ENCODE measurements at regions of chr12 and their contacts with region 1.

Region 1: DNA sequence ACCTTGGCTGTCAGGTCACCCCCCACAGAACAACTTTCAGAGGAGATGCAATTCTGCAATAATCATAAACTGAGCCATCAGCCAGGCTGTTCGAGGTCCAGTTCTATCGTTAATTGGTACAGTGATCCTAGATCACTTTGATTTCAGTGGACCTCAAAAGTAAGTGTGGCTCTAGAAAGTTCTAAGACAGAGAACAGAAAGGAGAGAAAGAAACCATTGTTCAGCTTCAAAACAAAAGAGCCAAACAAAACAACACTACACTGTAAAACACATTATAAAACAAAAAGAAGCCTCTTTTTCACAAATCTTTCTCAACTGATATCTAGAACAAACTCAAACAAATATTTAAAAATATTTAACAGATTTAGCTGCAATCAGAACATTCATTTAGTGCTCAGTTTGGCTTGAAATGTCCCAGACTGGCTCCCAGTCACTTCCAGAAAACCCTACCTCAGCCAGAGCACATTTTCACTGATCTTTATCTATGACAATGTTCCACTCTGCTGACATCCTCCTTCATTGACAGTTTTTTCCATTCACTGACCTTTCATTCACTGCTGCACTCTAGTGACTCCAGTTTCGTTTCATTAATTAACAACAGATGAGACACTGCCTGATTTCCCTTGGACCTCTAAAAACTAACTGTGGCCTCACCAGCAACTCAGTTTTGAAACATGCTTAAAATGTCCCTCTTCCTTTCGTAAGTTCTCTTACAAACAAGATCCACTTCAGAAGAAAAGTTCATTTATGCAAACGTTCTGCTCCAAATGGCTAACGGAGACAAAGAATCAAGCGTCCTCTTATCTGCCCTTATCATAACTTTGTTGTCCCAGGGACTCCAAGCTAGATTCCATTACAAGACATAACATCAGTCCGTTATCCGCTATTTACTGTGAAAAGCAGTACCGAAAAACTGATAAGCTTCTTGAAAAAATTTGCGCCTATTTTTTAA is 56.8 kb downstream of the DUSP16 start:
- DNase-seq: peak; percentile 51
- ATAC-seq: peak; percentile 79
- H3K4me3 Mint-ChIP-seq: peak overlapping the region; percentile 55
- H3K27ac Mint-ChIP-seq: peak overlapping the region; percentile 96
- H3K4me1 Mint-ChIP-seq: peaks cover 55% of the 10 kb centered on the region
- H3K27me3 Mint-ChIP-seq: no peaks in the 10 kb centered on the region

Region 2: GRCh38 chr12:12272869-12273268 is 233.0 kb before region 1 on chr12:
- CTCF ChIA-PET with region 1: no interaction called
- POLR2A ChIA-PET with region 1: no interaction called
- intact Hi-C with region 1: no loop called
- DNase-seq: no peak
- ATAC-seq: no peak
- H3K4me3 Mint-ChIP-seq: no peak overlapping the region
- H3K27ac Mint-ChIP-seq: no peak overlapping the region
- H3K4me1 Mint-ChIP-seq: peaks cover under 1% of the 10 kb centered on the region
- H3K27me3 Mint-ChIP-seq: no peaks in the 10 kb centered on the region

Region 3: DNA sequence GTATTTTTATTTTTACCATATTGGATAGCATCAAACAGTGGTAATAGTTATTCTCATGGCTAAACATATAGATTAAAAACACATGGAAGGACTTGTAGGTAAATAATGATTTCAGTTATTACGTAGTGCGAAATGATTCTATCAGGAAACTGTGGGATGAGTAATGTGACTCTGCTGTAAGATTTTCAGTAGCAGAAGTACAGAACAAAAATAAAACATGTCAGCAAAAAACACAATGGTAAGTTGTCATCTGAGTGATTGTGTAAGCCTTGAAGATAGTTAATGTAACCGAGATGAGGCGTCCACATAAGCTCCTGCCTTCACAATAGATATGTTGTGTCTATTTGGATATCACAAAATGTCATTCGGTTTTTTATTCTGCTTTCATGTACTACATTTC is 49.2 kb before region 1 on chr12:
- CTCF ChIA-PET with region 1: interaction called, 6 read pairs
- POLR2A ChIA-PET with region 1: interaction called, 12 read pairs
- intact Hi-C with region 1: no loop called
- DNase-seq: no peak
- ATAC-seq: peak; percentile 57
- H3K4me3 Mint-ChIP-seq: peak overlapping the region; percentile 3
- H3K27ac Mint-ChIP-seq: peak overlapping the region; percentile 88
- H3K4me1 Mint-ChIP-seq: peaks cover 46% of the 10 kb centered on the region
- H3K27me3 Mint-ChIP-seq: no peaks in the 10 kb centered on the region

Region 4: DNA sequence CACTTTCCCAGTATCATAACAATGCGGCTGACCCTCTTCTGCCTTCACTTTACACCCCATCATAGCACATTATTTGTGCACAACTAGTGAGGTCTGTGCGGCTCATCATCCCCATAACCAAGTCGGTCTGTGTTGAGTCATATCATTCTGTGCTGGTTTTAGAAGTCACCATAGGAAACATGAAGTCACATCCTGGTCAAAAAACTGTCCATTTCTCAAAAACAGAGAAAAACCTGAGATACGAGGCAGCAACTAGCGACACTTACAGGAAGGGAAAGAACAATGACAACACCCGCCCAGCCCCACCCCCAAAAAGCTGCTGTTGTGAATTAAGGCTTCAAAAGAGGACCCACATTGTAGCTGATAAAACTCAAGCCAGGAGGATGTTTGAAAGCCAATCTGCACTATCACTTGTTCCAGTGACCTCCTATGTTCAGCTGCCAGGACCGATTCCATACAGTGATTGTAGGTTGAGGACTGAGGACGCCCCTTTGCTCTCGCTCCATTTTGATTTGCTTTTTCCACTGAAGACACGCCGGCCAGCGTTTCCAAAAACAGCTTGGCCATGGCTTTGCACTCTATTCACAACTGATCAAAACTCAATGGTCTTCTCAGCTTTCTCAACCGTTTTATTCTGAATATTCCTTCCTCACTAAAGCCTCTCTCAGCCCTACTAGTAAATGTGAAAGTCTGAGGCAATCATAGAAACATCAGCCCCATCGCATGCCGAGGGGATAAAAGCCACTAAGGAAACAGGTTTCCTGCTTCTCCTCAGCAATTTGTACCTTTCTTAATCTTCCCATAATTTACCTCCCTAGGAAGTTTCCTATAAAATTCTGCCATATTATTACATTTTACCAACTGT is 30.7 kb before region 1 on chr12:
- CTCF ChIA-PET with region 1: interaction called, 5 read pairs
- POLR2A ChIA-PET with region 1: interaction called, 8 read pairs
- intact Hi-C with region 1: loop called in 1 of 2 experiments (anchors 1 kb)
- DNase-seq: peak; percentile 78
- ATAC-seq: peak; percentile 87
- H3K4me3 Mint-ChIP-seq: peak overlapping the region; percentile 59
- H3K27ac Mint-ChIP-seq: peak overlapping the region; percentile 97
- H3K4me1 Mint-ChIP-seq: peaks cover 81% of the 10 kb centered on the region
- H3K27me3 Mint-ChIP-seq: no peaks in the 10 kb centered on the region

Region 5: GRCh38 chr12:12611512-12612306 is 105.9 kb after region 1 on chr12 and contains the start of gene CREBL2:
- CTCF ChIA-PET with region 1: interaction called, 4 read pairs
- POLR2A ChIA-PET with region 1: no interaction called
- intact Hi-C with region 1: loop called (anchors 1 to 5 kb)
- DNase-seq: peak; percentile 92
- ATAC-seq: peak; percentile 77
- H3K4me3 Mint-ChIP-seq: peak within 1 kb of the TSS; percentile 93
- H3K27ac Mint-ChIP-seq: peak within 1 kb of the TSS; percentile 98
- H3K4me1 Mint-ChIP-seq: peaks cover 68% of the 10 kb centered on the region
- H3K27me3 Mint-ChIP-seq: no peaks in the 10 kb centered on the region
- total RNA-seq, gene CREBL2: 16.8 to 20.2 TPM

Measured in activated CD4-positive, alpha-beta T cell treated with anti-CD3 and anti-CD28 coated beads for 36 hours (primary cell).